Activated CD4-positive, alpha-beta T cell treated with anti-CD3 and anti-CD28 coated beads for 36 hours (primary cell): ENCODE measurements at regions of chr16 and their contacts with region 1.

Region 1: GRCh38 chr16:391885-392335 is 5.1 kb upstream of the NME4 start:
- DNase-seq: peak; percentile 91
- ATAC-seq: peak; percentile 93
- H3K4me3 Mint-ChIP-seq: no peak overlapping the region
- H3K27ac Mint-ChIP-seq: no peak overlapping the region
- H3K4me1 Mint-ChIP-seq: peaks cover 22% of the 10 kb centered on the region
- H3K27me3 Mint-ChIP-seq: peaks cover 3% of the 10 kb centered on the region

Region 2: GRCh38 chr16:425082-425718 is 33.3 kb after region 1 on chr16 and contains the start of gene RAB11FIP3:
- CTCF ChIA-PET with region 1: interaction called, 3 read pairs
- POLR2A ChIA-PET with region 1: interaction called, 5 read pairs
- intact Hi-C with region 1: loop called (anchors 1 to 5 kb)
- DNase-seq: peak; percentile 90
- ATAC-seq: peak; percentile 93
- H3K4me3 Mint-ChIP-seq: peak within 1 kb of the TSS; percentile 74
- H3K27ac Mint-ChIP-seq: peak within 1 kb of the TSS; percentile 47
- H3K4me1 Mint-ChIP-seq: peaks cover 30% of the 10 kb centered on the region
- H3K27me3 Mint-ChIP-seq: peaks cover 5% of the 10 kb centered on the region
- total RNA-seq, gene RAB11FIP3: 14.2 to 17.0 TPM

Region 3: DNA sequence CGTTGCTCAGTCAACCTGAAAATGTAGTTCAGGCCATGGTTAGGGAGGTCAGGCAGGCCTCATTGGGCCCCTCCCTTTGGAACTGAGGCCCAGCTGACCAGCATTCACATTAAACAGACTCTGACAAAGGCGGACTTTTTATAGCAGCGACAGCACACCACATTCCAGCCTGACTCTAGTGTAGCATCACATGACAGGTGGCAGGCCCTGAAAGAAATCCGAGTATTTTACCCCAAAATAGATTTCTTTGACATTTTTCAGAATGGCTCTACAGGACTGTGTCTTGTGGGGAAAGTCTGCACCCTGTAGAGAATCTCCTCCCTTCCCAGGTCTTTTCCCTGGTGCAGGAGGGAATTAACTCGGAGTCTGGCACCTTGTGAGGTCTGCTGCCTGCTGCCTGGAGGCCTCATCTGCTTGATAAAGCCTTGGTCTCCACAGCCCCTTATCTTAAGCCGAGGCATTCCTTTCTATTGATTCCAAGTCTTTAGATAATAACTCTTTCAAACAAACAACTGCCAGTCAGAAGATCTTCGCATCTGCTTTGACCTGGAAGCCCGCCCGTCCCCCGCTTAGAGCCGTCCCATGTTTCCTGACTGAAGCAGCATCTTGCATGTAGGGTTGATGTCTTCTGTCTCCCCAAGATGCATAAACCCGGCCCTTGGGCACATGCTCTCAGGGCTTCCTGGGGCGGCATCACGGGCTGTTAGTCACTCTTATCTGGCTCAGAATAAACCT is 91.6 kb after region 1 on chr16:
- CTCF ChIA-PET with region 1: interaction called, 12 read pairs
- POLR2A ChIA-PET with region 1: no interaction called
- intact Hi-C with region 1: loop called (anchors 1 to 5 kb)
- DNase-seq: no peak
- ATAC-seq: no peak
- H3K4me3 Mint-ChIP-seq: no peak overlapping the region
- H3K27ac Mint-ChIP-seq: no peak overlapping the region
- H3K4me1 Mint-ChIP-seq: no peaks in the 10 kb centered on the region
- H3K27me3 Mint-ChIP-seq: no peaks in the 10 kb centered on the region

Region 4: GRCh38 chr16:489606-490005 is 97.7 kb after region 1 on chr16:
- CTCF ChIA-PET with region 1: interaction called, 12 read pairs
- POLR2A ChIA-PET with region 1: no interaction called
- intact Hi-C with region 1: loop called (anchors 1 to 5 kb)
- DNase-seq: no peak
- ATAC-seq: no peak
- H3K4me3 Mint-ChIP-seq: no peak overlapping the region
- H3K27ac Mint-ChIP-seq: no peak overlapping the region
- H3K4me1 Mint-ChIP-seq: no peaks in the 10 kb centered on the region
- H3K27me3 Mint-ChIP-seq: no peaks in the 10 kb centered on the region

Region 5: GRCh38 chr16:495127-495748 is 103.3 kb after region 1 on chr16:
- CTCF ChIA-PET with region 1: interaction called, 3 read pairs
- POLR2A ChIA-PET with region 1: no interaction called
- intact Hi-C with region 1: loop called in 1 of 2 experiments (anchors 2 kb)
- DNase-seq: peak; percentile 54
- ATAC-seq: peak; percentile 58
- H3K4me3 Mint-ChIP-seq: no peak overlapping the region
- H3K27ac Mint-ChIP-seq: no peak overlapping the region
- H3K4me1 Mint-ChIP-seq: no peaks in the 10 kb centered on the region
- H3K27me3 Mint-ChIP-seq: no peaks in the 10 kb centered on the region

Region 6: DNA sequence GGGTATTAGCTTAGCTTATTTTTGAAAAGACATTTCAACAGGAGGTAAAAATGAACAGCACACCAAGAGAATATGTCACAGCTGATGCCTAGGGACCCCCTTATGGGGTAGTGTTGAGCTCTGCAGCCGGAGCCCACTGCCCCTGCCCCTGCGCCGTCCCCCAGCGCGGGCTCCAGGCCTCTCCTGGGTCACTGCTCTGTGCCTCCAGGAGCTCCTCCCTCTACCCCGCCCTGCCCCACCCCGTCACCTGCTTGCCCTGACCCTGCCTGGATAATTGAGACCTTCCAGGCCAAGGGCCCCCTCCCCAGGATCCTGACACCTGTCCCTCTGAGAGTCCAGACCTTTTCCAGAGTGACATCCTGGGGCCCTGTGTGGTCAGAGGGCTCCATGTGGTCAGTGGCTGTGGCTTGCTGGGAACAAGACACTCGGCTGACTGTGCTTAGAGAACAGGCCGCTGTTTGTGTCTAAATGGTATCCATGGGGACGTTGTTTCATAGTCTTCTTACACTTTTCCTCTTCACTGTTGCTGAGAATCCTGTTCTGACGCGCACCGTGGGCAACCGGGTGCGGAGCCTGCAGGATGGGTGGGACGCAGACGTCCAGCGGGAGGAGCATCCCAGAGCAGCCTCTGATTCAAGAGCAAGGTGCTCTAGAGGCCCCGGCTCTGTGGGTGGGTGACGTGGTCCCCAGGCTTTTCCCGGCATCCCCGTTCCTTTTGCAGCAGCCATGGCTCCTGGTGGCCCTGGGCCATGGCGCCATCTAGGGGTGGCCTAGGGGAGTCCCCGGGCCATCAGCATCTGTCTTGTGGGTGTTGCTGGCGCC is 218.8 kb after region 1 on chr16:
- CTCF ChIA-PET with region 1: no interaction called
- POLR2A ChIA-PET with region 1: no interaction called
- intact Hi-C with region 1: loop called in 1 of 2 experiments (anchors 5 kb)
- DNase-seq: peak; percentile 82
- ATAC-seq: peak; percentile 57
- H3K4me3 Mint-ChIP-seq: no peak overlapping the region
- H3K27ac Mint-ChIP-seq: peak overlapping the region; percentile 32
- H3K4me1 Mint-ChIP-seq: peaks cover 17% of the 10 kb centered on the region
- H3K27me3 Mint-ChIP-seq: no peaks in the 10 kb centered on the region